IMR-90 (cell line): ENCODE measurements at regions of chr12 and their contacts with region 1.

Region 1: DNA sequence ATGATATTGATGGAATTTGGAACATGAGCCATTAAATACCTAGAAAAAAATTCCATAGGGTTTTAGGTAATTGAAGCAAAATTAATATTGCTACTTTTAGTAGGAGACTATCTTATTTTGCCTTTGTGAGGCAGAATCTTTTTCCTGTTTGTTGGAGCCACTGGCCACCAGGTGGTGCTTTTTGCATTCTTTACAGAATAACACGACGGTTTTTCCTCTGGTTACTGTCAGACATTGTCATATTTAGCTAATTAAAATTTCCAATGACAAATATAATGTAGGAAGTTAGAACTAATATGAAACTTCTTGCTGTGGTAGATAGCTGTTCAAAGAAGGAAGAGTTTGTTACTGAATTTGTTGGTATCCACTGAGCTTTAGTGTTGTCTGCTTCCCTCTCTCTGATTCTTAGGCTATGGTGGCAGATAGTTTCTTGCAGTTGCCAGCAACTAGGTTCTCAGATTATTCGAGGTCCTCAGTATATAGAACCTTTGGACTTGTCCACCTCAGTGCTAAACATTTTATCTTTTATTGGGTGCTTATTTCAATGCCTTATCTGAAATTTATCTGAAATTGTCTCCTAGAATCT is 25.7 kb downstream of the RAB21 start:
- DNase-seq: peak; percentile 50
- ATAC-seq: peak; percentile 75
- H3K4me3 ChIP-seq: no peak overlapping the region
- H3K27ac ChIP-seq: no peak overlapping the region
- H3K4me1 ChIP-seq: no peaks in the 10 kb centered on the region
- H3K27me3 ChIP-seq: no peaks in the 10 kb centered on the region
- CTCF ChIP-seq: peak; percentile 76
- POLR2A ChIP-seq: no peak
- RAD21 ChIP-seq: peak; percentile 68

Region 2: GRCh38 chr12:71846322-71846940 is 66.1 kb after region 1 on chr12:
- CTCF ChIA-PET with region 1: interaction called, 4 read pairs
- POLR2A ChIA-PET with region 1: no interaction called
- dilution Hi-C with region 1: no loop called
- in situ Hi-C with region 1: no loop called
- intact Hi-C with region 1: loop called (anchors 1 kb)
- DNase-seq: peak; percentile 47
- ATAC-seq: peak; percentile 66
- H3K4me3 ChIP-seq: no peak overlapping the region
- H3K27ac ChIP-seq: no peak overlapping the region
- H3K4me1 ChIP-seq: no peaks in the 10 kb centered on the region
- H3K27me3 ChIP-seq: no peaks in the 10 kb centered on the region
- CTCF ChIP-seq: peak; percentile 61
- POLR2A ChIP-seq: no peak
- RAD21 ChIP-seq: peak; percentile 46

Region 3: DNA sequence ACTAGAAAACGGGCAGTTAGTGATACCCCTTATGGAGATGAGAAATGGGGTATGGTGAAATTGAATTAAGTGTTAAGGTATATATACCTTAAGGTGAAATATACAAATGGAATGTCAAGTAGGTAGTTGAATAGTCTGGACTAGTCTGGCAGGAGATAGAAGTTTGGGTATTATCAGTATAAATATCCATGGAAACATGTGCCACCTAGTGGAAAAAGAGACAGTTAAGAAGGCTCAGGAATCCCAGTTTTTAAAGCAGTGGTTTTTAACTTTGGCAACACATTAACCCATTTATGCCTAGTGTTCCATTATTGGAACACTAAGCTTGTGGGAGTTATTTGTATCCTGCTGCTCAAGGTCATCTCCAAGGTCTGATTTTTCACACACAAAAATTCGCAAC is 119.8 kb after region 1 on chr12:
- CTCF ChIA-PET with region 1: no interaction called
- POLR2A ChIA-PET with region 1: no interaction called
- dilution Hi-C with region 1: no loop called
- in situ Hi-C with region 1: no loop called
- intact Hi-C with region 1: loop called (anchors 2 kb)
- DNase-seq: peak; percentile 20
- ATAC-seq: peak; percentile 76
- H3K4me3 ChIP-seq: no peak overlapping the region
- H3K27ac ChIP-seq: no peak overlapping the region
- H3K4me1 ChIP-seq: peaks cover 6% of the 10 kb centered on the region; the same call in 1 of the 2 replicates
- H3K27me3 ChIP-seq: no peaks in the 10 kb centered on the region
- CTCF ChIP-seq: peak; percentile 42
- POLR2A ChIP-seq: no peak
- RAD21 ChIP-seq: peak; percentile 43

Region 4: DNA sequence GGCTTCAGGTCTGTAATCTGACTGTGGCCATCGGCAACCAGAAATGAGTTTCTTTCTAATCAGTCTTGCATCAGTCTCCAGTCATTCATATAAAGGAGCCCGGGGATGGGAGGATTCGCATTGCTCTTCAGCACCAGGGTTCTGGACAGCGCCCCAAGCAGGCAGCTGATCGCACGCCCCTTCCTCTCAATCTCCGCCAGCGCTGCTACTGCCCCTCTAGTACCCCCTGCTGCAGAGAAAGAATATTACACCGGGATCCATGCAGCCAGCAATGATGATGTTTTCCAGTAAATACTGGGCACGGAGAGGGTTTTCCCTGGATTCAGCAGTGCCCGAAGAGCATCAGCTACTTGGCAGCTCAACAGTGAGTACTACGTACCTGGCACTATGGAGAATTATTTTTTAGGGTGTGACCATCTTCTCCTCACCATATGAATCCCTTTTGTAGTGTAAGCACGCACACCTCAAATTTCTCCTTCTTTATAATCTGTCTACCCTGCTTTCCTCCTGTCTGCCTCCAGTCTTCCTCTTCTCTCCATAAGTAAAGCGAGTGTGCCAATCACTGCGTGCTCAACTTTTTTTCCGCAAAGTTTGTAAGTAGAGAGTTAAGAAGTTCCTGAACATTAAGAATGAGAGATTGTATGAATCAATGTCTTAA is 158.5 kb after region 1 on chr12 and contains the start of gene TPH2:
- CTCF ChIA-PET with region 1: interaction called, 4 read pairs
- POLR2A ChIA-PET with region 1: no interaction called
- dilution Hi-C with region 1: no loop called
- in situ Hi-C with region 1: no loop called
- intact Hi-C with region 1: loop called (anchors 2 kb)
- DNase-seq: peak; percentile 68
- ATAC-seq: peak; percentile 97
- H3K4me3 ChIP-seq: no peak within 1 kb of the TSS
- H3K27ac ChIP-seq: no peak within 1 kb of the TSS
- H3K4me1 ChIP-seq: no peaks in the 10 kb centered on the region
- H3K27me3 ChIP-seq: no peaks in the 10 kb centered on the region
- CTCF ChIP-seq: peak; percentile 66
- POLR2A ChIP-seq: no peak
- RAD21 ChIP-seq: peak; percentile 67
- total RNA-seq, gene TPH2: not detected in 2 replicates

Region 5: DNA sequence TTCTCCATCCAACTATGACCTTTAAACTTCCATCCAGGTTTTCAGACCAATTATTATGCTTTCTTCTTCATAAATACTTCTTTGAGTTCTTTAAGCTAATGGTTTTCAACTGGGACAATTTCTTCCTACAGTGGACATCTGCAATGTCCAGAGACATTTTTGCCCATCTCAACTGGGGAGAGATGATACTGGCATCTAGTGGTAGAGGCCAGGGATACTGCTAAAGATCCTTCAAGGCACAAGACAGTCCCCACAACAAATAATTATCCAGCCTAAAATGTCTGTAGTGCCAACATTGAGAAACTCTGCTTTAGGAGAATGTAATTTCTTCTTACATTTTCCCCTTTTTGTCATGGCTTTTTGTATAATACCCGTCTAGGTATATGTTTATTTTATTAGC is 502.4 kb after region 1 on chr12:
- CTCF ChIA-PET with region 1: no interaction called
- POLR2A ChIA-PET with region 1: no interaction called
- dilution Hi-C with region 1: no loop called
- in situ Hi-C with region 1: no loop called
- intact Hi-C with region 1: loop called (anchors 10 kb)
- DNase-seq: no peak
- ATAC-seq: peak; percentile 77
- H3K4me3 ChIP-seq: no peak overlapping the region
- H3K27ac ChIP-seq: no peak overlapping the region
- H3K4me1 ChIP-seq: peaks cover 9% of the 10 kb centered on the region
- H3K27me3 ChIP-seq: no peaks in the 10 kb centered on the region
- CTCF ChIP-seq: peak; percentile 58
- POLR2A ChIP-seq: no peak
- RAD21 ChIP-seq: peak; percentile 73